ENCODE measurements at regions of chr11 and their contacts with region 1.

Region 1: DNA sequence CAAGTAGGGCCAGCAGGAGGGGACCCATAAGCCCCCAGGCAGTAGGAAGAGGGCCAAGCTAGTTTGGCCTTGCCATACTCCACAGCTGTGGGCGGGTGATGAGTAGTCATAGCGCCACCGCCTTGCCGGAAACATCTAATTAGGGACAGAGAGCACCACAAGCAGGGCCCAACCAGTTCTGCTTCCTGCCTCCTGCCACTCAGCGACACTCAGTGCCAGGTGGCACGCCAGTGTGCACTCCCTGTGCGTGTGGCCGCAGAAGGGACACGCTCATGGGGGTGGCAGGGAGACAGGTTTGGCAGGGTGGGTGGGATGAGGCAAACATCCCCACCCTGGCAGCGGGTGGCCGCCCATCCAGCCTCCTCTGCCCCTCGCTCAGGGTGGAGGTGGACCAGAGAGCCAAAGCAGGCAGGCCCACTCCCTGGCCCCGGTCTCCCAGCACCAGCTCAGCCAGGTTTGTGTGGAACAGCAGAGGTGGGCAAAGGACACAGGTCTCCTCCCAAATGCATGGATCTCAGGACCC is 4.9 kb downstream of the OVOL1 start:
- DNase-seq: no peak
- H3K4me3 ChIP-seq: no peak overlapping the region
- H3K27me3 ChIP-seq: peaks cover 31% of the 10 kb centered on the region
- CTCF ChIP-seq: no peak

Region 2: DNA sequence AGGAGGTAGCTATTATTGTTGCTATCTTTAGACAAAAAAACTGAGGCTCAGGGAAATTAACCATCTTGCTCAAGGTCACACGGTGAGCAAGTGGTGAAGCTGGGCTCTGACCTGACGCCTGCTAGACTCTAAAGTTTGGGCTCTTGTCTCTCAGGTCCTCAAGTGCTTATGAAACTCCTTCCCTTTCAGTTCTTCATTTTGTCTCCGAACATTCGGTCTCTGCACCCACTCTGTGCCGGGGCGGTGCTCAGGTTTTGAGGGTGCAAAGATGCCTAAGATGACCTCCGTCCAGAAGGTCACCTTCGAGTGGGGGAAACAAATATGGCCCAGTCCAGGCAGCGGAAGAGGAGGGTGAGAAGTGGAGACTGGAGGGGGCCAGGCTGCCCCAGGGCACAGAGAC is 11.1 kb after region 1 on chr11:
- CTCF ChIA-PET with region 1: interaction called, 5 read pairs
- POLR2A ChIA-PET with region 1: interaction called, 10 read pairs
- DNase-seq: no peak
- H3K4me3 ChIP-seq: no peak overlapping the region
- H3K27me3 ChIP-seq: peaks cover 19% of the 10 kb centered on the region
- CTCF ChIP-seq: no peak

Measured in BJ (cell line).